ENCODE measurements at regions of chr2 and their contacts with region 1.

Region 1: DNA sequence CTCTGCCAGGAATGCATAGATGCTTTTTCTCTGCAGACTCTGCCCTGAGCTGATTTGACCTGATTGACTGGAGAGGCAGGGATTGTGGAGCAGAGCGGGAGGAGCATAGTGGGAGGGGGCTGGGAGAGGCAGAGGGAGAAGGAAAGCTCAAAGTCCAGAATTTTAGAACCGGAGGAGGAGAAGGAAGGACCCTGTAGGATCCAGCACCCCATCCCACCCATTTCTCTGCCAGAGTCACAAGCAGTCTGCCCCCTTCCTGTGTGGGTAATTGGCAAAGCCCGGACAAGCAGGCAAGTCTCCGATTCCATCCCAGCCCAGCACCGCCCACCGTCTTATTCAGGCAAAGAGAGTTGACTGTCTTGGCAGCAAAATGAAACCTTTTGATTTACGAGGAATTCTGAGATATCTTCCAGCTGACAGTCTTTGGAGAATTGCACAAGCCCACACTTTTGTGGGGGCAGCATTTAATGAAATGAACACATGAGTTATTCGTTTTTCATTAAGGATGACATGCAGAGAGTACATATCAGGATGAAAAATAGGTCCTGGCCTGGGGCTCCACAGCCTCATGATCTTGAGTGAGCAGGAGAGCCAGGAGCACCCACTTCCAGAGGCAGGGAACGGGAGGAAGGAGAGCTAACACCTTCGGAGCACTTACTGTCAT is 103.1 kb downstream of the MCFD2 start:
- DNase-seq: peak; percentile 51
- H3K4me3 Mint-ChIP-seq: no peak overlapping the region
- H3K27ac Mint-ChIP-seq: peak overlapping the region; percentile 27
- H3K4me1 Mint-ChIP-seq: no peaks in the 10 kb centered on the region
- H3K27me3 Mint-ChIP-seq: peaks cover 11% of the 10 kb centered on the region
- CTCF ChIP-seq: no peak

Region 2: GRCh38 chr2:46827632-46828438 is 15.3 kb after region 1 on chr2:
- CTCF ChIA-PET with region 1: interaction called, 10 read pairs
- POLR2A ChIA-PET with region 1: no interaction called
- intact Hi-C with region 1: no loop called
- DNase-seq: peak; percentile 53
- H3K4me3 Mint-ChIP-seq: no peak overlapping the region
- H3K27ac Mint-ChIP-seq: no peak overlapping the region
- H3K4me1 Mint-ChIP-seq: peaks cover 6% of the 10 kb centered on the region
- H3K27me3 Mint-ChIP-seq: no peaks in the 10 kb centered on the region
- CTCF ChIP-seq: no peak

Region 3: GRCh38 chr2:46954948-46955571 is 142.6 kb after region 1 on chr2:
- CTCF ChIA-PET with region 1: no interaction called
- POLR2A ChIA-PET with region 1: no interaction called
- intact Hi-C with region 1: no loop called
- DNase-seq: peak; percentile 57
- H3K4me3 Mint-ChIP-seq: peak overlapping the region; percentile 29
- H3K27ac Mint-ChIP-seq: peak overlapping the region; percentile 77
- H3K4me1 Mint-ChIP-seq: peaks cover 18% of the 10 kb centered on the region
- H3K27me3 Mint-ChIP-seq: no peaks in the 10 kb centered on the region
- CTCF ChIP-seq: no peak

Measured in MCF 10A (cell line).